ENCODE measurements at regions of chr14 and their contacts with region 1.

Region 1: GRCh38 chr14:39276005-39276404 is 42.3 kb downstream of the MIA2 start:
- DNase-seq: no peak
- H3K4me3 Mint-ChIP-seq: no peak overlapping the region
- H3K27ac Mint-ChIP-seq: peak overlapping the region; percentile 2
- H3K4me1 Mint-ChIP-seq: peaks cover 60% of the 10 kb centered on the region
- H3K27me3 Mint-ChIP-seq: no peaks in the 10 kb centered on the region

Region 2: GRCh38 chr14:39351708-39352107 is 75.7 kb after region 1 on chr14:
- CTCF ChIA-PET with region 1: no interaction called
- intact Hi-C with region 1: loop called (anchors 5 kb)
- DNase-seq: no peak
- H3K4me3 Mint-ChIP-seq: no peak overlapping the region
- H3K27ac Mint-ChIP-seq: no peak overlapping the region
- H3K4me1 Mint-ChIP-seq: peaks cover 8% of the 10 kb centered on the region
- H3K27me3 Mint-ChIP-seq: no peaks in the 10 kb centered on the region

Measured in activated naive CD4-positive, alpha-beta T cell treated with anti-CD3 and anti-CD28 coated beads for 36 hours (primary cell).